Naive thymus-derived CD8-positive, alpha-beta T cell (primary cell): ENCODE measurements at regions of chr15 and their contacts with region 1.

Region 1: DNA sequence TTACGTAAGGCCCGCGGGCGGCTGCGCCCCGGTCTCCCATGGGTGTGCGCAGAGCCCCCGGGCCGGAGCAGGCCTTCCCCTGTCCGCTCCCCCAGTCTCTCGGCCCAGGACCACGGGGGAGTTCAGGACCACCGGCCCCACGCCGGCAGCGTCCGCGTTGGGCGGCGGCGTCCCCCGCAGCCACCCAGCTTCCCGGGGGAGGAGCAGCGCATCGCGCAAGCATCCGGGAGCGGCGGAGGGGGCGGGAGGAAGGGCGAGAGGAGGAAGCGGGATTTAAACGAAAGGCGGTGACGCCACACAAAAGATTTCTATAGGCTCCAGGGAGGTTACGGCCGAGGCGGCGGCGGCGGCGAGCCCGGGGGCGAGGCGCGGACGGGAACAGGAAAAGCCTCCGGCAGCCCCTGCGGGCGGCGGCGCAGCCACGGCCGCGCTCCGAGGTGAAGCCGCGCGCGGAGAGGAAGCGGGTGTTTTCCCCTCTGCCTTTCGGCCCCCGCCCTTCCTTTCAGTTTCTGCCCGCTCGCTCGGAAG is at the start of gene TLNRD1:
- DNase-seq: peak; percentile 63 to 89 (median 74)
- ATAC-seq: peak; percentile 71
- H3K4me3 Mint-ChIP-seq: peak within 1 kb of the TSS; percentile 88 to 98 (median 94)
- H3K27ac Mint-ChIP-seq: peak within 1 kb of the TSS; percentile 93 to 99 (median 96)
- H3K4me1 Mint-ChIP-seq: peaks cover 28 to 63% (median 50%) of the 10 kb centered on the region in 4 donors
- H3K27me3 Mint-ChIP-seq: no peaks in the 10 kb centered on the region
- polyA plus RNA-seq, gene TLNRD1: 2.2 to 2.9 (median 2.8) TPM

Region 2: DNA sequence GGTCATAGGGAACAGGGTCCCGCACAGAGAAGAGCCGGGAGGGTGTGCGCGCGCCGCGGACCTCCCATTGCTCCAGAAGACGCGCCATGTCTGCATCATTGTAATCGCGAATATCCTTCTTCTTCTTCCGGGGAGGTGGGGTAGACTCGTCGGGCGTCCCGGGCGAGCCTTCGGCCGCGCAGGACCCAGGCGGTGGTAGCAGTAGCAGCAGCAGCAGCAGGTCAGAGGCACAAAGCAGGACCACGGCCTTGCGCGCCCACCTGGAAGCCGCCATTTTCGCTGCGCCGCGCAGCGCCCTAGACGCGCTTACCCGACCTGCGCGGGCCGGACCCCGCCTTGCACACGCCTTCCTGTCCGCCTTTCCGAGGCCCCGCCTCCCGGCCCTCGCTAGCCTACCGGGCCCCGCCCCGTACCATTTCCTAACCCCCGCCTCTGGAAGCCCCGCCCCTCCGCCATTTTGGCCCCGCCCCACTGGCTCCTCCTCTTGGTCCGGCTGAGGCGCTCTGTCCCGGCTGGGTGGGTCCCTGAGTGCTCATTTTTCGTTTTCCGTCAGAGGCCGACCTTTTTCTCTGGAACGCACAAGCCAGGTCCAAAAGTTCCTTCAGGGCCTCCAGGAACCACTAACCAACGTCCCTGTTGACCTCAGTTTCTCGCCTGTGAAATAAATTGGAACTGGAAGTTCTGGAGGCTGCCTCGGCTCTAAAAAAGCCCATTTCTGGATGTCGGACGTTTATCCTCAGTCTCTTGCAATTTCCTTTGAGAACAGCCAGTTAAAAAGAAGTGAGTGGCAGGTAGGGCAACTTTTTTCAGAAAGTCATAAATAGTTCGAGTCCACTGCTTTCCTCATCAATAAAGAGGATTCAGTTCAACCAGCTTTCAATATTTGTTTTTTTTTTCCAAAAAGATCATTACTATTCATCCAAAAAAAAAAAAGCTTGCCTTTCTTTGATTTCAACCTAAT is 10.9 kb before region 1 on chr15 and contains the start of gene MESD:
- POLR2A ChIA-PET with region 1: interaction called, 58 read pairs
- DNase-seq: peak; percentile 90 to 97 (median 94)
- ATAC-seq: peak; percentile 99 to 100
- H3K4me3 Mint-ChIP-seq: peak within 1 kb of the TSS; percentile 95 to 100 (median 99)
- H3K27ac Mint-ChIP-seq: peak within 1 kb of the TSS; percentile 97 to 99 (median 99)
- H3K4me1 Mint-ChIP-seq: peaks cover 37 to 70% (median 61%) of the 10 kb centered on the region in 4 donors
- H3K27me3 Mint-ChIP-seq: no peaks in the 10 kb centered on the region
- polyA plus RNA-seq, gene MESD: 21.3 to 30.7 (median 22.5) TPM

Region 3: GRCh38 chr15:81029414-81030300 is 29.0 kb after region 1 on chr15:
- POLR2A ChIA-PET with region 1: no interaction called
- DNase-seq: no peak
- ATAC-seq: no peak
- H3K4me3 Mint-ChIP-seq: no peak overlapping the region
- H3K27ac Mint-ChIP-seq: no peak overlapping the region
- H3K4me1 Mint-ChIP-seq: peaks cover 3 to 18% (median 10%) of the 10 kb centered on the region in 4 donors
- H3K27me3 Mint-ChIP-seq: peaks cover 0 to 16% (median 8%) of the 10 kb centered on the region in 5 donors